ENCODE measurements at regions of chr3 and their contacts with region 1.

Region 1: DNA sequence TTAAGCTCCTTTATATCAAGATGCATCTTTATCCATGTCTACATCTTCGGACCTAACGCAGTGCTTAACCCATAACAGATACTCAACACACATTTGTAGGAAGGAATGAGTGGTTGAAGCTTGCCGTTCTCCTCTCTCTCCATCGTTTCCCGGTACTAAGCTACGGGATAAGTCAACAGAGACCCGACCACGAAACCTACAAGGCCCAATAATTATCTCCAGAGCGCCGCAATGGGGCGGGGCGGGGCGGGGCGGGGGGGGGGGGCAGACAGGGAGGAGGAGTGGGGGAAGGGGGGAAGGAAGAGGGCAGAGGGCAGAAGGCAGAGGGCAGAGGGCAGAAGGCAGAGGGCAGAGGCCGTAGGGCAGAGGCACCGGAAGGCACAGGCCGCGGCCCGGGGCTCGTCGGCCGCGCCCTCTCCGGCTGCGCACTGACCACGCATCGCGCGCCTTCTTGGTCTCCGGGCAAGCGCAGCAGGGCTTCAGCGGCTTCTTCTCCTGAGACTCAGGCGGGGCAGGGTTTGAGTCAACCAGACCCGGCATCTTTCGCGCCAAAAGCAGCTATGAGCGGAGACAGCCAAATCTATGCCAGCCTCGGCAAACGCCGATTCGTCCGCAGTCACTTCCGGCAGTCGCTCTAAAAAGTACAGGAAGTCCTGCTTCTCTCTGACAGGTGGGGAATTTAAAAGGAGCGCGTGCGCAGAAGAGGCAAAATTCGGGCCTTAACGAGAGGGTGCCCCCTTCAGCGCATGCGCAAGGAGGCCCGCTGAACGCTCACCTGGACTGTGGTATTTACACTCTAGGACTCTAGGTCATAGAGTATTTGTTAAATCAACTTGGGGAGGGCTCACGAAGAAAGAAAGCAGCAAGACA is at the start of gene COX17:
- DNase-seq: peak; percentile 98
- ATAC-seq: peak; percentile 94
- H3K4me3 Mint-ChIP-seq: peak within 1 kb of the TSS; percentile 96
- H3K27ac Mint-ChIP-seq: peak within 1 kb of the TSS; percentile 95
- H3K4me1 Mint-ChIP-seq: peaks cover 35% of the 10 kb centered on the region
- H3K27me3 Mint-ChIP-seq: no peaks in the 10 kb centered on the region
- total RNA-seq, gene COX17: 62.0 to 71.5 TPM

Region 2: GRCh38 chr3:119463171-119464169 is 213.5 kb before region 1 on chr3 and contains the start of gene TMEM39A:
- CTCF ChIA-PET with region 1: interaction called, 14 read pairs
- POLR2A ChIA-PET with region 1: interaction called, 20 read pairs
- DNase-seq: peak; percentile 99
- ATAC-seq: peak; percentile 92
- H3K4me3 Mint-ChIP-seq: peak within 1 kb of the TSS; percentile 97
- H3K27ac Mint-ChIP-seq: peak within 1 kb of the TSS; percentile 99
- H3K4me1 Mint-ChIP-seq: peaks cover 45% of the 10 kb centered on the region
- H3K27me3 Mint-ChIP-seq: no peaks in the 10 kb centered on the region
- total RNA-seq, gene TMEM39A: 30.5 to 31.2 TPM

Region 3: GRCh38 chr3:119498186-119498987 is 178.6 kb before region 1 on chr3 and contains the start of gene TIMMDC1:
- CTCF ChIA-PET with region 1: interaction called, 8 read pairs
- POLR2A ChIA-PET with region 1: interaction called, 19 read pairs
- DNase-seq: peak; percentile 98
- ATAC-seq: peak; percentile 99
- H3K4me3 Mint-ChIP-seq: peak within 1 kb of the TSS; percentile 99
- H3K27ac Mint-ChIP-seq: peak within 1 kb of the TSS; percentile 98
- H3K4me1 Mint-ChIP-seq: peaks cover 32% of the 10 kb centered on the region
- H3K27me3 Mint-ChIP-seq: no peaks in the 10 kb centered on the region
- total RNA-seq, gene TIMMDC1: 78.1 to 79.8 TPM

Region 4: DNA sequence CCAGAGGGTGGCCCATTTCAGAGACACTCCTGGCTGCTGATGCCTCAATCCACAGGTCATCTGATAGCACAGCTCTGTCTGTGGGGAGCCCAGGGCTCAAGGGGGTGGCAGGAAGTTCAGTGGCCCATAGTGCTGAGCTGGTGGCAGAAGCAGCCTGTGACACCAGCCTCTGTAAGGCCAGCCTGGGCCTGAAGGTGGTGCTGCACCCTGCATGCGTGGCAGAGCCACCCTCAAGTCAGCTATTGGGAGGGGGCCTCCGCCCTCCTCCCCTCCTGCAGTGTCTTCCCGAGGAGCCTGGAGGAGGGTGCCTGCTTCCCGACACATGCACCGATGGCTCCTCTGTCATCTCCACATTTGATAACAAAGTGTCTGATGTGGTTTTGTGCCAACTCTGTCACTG is 76.3 kb before region 1 on chr3:
- CTCF ChIA-PET with region 1: interaction called, 19 read pairs
- POLR2A ChIA-PET with region 1: interaction called, 9 read pairs
- DNase-seq: peak; percentile 31
- ATAC-seq: peak; percentile 77
- H3K4me3 Mint-ChIP-seq: no peak overlapping the region
- H3K27ac Mint-ChIP-seq: no peak overlapping the region
- H3K4me1 Mint-ChIP-seq: peaks cover 43% of the 10 kb centered on the region
- H3K27me3 Mint-ChIP-seq: peaks cover 3% of the 10 kb centered on the region

Region 5: DNA sequence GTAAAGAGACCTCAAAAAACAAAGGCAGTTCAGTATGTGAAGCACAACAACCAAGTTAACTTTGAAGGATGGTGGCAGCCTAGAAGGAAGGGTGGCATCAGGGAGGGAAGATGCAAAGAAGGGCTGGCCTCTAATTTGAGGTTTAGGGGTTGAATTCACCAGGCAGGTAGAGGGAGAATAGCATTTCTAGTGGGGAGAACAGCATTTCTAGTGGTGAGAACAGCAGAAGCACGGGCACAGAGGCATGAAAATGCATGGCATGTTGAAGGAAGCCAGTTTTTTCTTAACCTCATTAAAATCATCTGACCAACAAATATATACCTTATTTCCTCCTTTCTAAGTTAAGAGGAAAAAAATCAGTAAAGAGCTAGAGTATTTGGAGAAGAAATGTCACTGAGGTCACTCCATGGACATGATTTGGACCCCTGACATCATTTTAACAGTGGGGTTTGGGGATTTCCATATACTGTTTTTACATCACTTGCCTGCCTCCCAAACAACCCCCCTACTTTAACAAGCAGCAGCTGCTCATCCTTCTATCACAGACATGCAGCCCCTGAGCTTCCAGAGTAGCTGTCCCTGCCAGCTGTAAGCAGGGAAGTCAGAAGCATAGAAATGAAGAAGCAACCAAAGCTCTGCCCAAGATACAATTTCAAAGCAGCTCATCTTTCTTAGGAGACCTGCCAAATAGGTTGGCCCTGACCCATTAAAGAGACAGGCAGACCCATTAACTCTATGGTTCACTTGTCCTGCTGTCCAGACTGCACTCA is 14.2 kb before region 1 on chr3:
- CTCF ChIA-PET with region 1: interaction called, 13 read pairs
- POLR2A ChIA-PET with region 1: interaction called, 11 read pairs
- DNase-seq: no peak
- ATAC-seq: no peak
- H3K4me3 Mint-ChIP-seq: no peak overlapping the region
- H3K27ac Mint-ChIP-seq: no peak overlapping the region
- H3K4me1 Mint-ChIP-seq: peaks cover 27% of the 10 kb centered on the region
- H3K27me3 Mint-ChIP-seq: no peaks in the 10 kb centered on the region

Region 6: DNA sequence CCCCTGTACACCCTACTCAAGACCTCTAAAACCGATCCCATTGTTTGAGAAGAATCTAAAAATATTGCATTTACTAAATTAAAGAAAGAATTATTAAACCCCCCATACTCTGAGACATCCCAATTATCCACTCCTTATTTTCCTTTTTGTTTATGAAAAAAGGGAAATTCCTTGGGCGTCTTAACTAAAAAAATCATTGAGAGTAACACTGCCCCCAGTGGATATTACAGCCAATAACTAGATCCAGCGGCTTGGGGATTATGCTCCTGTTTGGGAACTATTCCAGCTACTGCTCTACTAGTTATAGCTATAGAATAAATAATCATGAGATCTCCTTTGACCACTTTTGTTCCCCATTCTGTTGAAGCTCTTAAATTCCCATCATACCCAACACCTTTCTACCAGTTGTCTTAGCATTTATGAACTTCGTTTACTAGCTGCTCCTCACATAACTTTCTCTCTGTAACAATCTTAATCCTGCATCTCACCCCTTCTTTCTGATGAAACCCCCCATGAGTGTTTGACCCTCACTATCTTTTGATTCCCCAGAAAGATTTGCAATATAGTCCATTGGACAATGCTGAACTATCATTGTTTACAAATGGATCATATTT is 13.1 kb after region 1 on chr3:
- CTCF ChIA-PET with region 1: interaction called, 30 read pairs
- POLR2A ChIA-PET with region 1: interaction called, 3 read pairs
- DNase-seq: no peak
- ATAC-seq: no peak
- H3K4me3 Mint-ChIP-seq: no peak overlapping the region
- H3K27ac Mint-ChIP-seq: no peak overlapping the region
- H3K4me1 Mint-ChIP-seq: peaks cover 2% of the 10 kb centered on the region
- H3K27me3 Mint-ChIP-seq: peaks cover 22% of the 10 kb centered on the region

Region 7: GRCh38 chr3:119695480-119695879 is 18.5 kb after region 1 on chr3:
- CTCF ChIA-PET with region 1: interaction called, 30 read pairs
- POLR2A ChIA-PET with region 1: interaction called, 3 read pairs
- DNase-seq: no peak
- ATAC-seq: no peak
- H3K4me3 Mint-ChIP-seq: no peak overlapping the region
- H3K27ac Mint-ChIP-seq: no peak overlapping the region
- H3K4me1 Mint-ChIP-seq: peaks cover 9% of the 10 kb centered on the region
- H3K27me3 Mint-ChIP-seq: peaks cover 6% of the 10 kb centered on the region

Region 8: DNA sequence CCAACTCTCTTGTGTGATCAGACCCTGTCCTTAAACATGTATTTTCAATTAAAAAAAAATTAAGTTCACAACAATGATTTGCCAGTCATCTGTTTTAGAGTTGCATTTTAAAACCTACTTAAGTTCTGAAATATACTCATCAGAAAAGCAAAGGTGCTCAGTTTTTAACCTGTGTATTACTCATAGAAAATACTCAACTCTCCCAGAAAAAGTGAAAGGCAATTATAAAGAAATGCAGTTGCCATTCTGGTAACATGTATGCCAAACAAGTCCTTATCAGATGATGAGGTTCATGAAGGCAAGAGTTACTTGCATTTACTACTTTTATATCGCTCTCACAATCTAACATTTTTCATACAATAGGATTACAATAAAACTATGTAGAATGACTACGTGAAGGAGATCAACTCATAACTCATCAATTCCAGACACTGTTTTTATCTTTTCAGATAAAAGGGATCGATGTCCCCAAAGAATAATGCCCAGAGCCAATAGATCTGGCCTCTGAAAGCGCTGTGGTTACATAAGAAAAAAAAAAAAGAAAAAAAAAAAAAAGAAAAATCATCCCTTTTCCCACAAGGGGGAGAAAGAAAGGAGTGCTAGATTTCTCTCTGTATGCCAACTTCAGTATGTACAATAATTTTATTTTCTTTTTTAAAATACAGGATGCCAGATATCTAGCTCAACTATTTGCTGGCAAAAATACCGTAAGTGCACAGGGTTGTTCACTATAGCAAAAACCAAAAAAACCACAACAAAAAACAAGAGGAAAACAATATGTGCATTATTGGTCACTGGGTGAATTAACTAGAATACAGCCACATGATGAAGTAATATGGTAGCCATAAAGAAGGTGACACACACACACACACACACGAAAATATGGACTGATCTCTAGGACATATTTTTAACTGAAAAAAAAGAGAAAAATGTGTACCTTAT is 242.3 kb after region 1 on chr3:
- CTCF ChIA-PET with region 1: no interaction called
- POLR2A ChIA-PET with region 1: no interaction called
- DNase-seq: no peak
- ATAC-seq: peak; percentile 42
- H3K4me3 Mint-ChIP-seq: no peak overlapping the region
- H3K27ac Mint-ChIP-seq: no peak overlapping the region
- H3K4me1 Mint-ChIP-seq: peaks cover 9% of the 10 kb centered on the region
- H3K27me3 Mint-ChIP-seq: no peaks in the 10 kb centered on the region